Activated CD4-positive, alpha-beta T cell treated with anti-CD3 and anti-CD28 coated beads for 36 hours (primary cell): ENCODE measurements at regions of chrX and their contacts with region 1.

Region 1: GRCh38 chrX:130799393-130799792 is 103.6 kb downstream of the ENOX2 start:
- DNase-seq: no peak
- ATAC-seq: no peak
- H3K4me3 Mint-ChIP-seq: no peak overlapping the region
- H3K27ac Mint-ChIP-seq: no peak overlapping the region
- H3K4me1 Mint-ChIP-seq: no peaks in the 10 kb centered on the region
- H3K27me3 Mint-ChIP-seq: no peaks in the 10 kb centered on the region

Region 2: GRCh38 chrX:130539721-130540321 is 259.6 kb before region 1 on chrX:
- CTCF ChIA-PET with region 1: no interaction called
- POLR2A ChIA-PET with region 1: no interaction called
- intact Hi-C with region 1: loop called in 1 of 2 experiments (anchors 2 kb)
- DNase-seq: peak; percentile 64
- ATAC-seq: peak; percentile 30
- H3K4me3 Mint-ChIP-seq: no peak overlapping the region
- H3K27ac Mint-ChIP-seq: no peak overlapping the region
- H3K4me1 Mint-ChIP-seq: no peaks in the 10 kb centered on the region
- H3K27me3 Mint-ChIP-seq: peaks cover 4% of the 10 kb centered on the region